ENCODE measurements at regions of chr17 and their contacts with region 1.

Region 1: DNA sequence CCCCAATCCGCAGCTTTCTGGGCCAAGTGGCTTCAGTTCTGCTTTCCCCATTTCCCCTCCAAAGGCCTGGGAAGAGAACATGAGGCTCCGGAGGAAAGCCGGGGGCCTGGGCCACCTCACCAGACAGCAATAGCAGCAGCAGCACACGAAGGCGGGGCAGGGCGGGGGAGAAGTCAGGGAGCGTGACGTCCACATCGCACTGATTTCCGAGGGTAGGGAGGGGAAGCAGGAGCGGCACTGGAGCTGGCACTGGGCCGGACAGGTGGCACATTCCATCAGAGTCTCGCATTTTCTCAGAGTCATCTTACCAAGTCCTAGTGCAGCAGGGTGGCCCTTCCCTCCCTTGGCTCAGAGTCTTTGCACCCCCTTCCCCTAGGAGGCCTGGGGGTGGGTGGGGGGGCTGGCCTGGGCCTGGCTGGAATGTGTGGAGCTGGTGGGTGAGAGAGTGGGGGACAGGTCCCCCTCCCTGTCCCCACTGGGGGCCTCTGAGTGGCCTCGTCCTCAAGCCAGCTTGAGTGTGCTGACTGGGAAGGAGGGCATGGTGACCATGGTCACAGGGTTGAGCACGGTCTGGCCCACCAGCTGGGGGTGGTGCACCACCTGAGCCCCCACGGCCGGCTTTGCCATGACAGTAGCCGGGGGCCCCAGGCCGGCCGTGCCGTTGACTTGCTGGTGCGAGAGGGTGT is 14.3 kb downstream of the MNT start:
- DNase-seq: no peak
- ATAC-seq: no peak
- H3K4me3 ChIP-seq: no peak overlapping the region
- H3K4me3 Mint-ChIP-seq: no peak overlapping the region
- H3K27ac ChIP-seq: no peak overlapping the region
- H3K27ac Mint-ChIP-seq: no peak overlapping the region
- H3K4me1 ChIP-seq: peaks cover 34% of the 10 kb centered on the region
- H3K4me1 Mint-ChIP-seq: peaks cover 36% of the 10 kb centered on the region
- H3K27me3 ChIP-seq: no peaks in the 10 kb centered on the region
- H3K27me3 Mint-ChIP-seq: no peaks in the 10 kb centered on the region
- CTCF ChIP-seq: no peak

Region 2: DNA sequence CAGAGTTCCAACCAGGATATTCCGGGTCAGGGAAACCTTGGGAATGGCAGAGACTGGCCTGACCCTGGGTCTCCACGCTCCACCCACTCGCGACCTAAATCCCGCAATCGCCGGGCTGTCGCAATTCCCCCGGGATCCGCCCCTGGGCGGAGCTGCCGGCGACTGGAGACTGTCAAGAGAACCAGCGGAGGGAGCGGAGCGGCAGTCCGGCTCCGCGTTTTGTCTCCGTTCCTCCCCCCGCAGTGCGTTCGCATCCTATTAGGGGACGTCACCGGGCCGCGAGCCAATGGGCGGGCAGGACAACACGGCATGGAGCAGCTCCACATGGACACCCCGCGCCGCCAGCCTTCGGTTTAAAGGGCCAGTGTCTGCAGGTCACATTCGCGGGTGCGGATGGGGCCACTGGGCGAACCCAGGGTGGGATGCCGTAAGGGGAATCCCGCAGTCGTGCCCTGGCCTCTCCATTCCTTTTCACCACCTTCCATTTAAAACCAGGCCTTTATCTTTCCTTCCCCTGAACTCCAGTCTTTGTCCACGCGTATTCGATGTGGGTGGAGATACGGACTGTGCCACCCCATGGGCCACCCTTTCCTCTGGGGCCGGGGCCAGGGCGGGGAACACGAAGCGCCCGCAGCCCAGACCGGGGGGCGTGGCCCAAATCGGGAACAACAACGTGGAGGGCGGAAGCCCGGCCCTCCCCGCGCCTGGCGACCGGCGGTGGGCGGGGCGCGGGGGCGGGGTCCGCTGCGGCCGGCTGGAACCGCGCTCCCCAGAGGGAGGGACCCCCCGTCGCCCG is 15.1 kb after region 1 on chr17:
- CTCF ChIA-PET with region 1: interaction called, 52 read pairs
- POLR2A ChIA-PET with region 1: interaction called, 132 read pairs
- intact Hi-C with region 1: loop called (anchors 1 to 2 kb)
- DNase-seq: peak; percentile 97 to 99 (median 99)
- ATAC-seq: peak; percentile 58
- H3K4me3 ChIP-seq: peak overlapping the region; percentile 93
- H3K4me3 Mint-ChIP-seq: peak overlapping the region; percentile 100
- H3K27ac ChIP-seq: peak overlapping the region; percentile 93 to 100
- H3K27ac Mint-ChIP-seq: peak overlapping the region; percentile 99
- H3K4me1 ChIP-seq: peaks cover 51% of the 10 kb centered on the region
- H3K4me1 Mint-ChIP-seq: peaks cover 47% of the 10 kb centered on the region
- H3K27me3 ChIP-seq: no peaks in the 10 kb centered on the region
- H3K27me3 Mint-ChIP-seq: no peaks in the 10 kb centered on the region
- CTCF ChIP-seq: no peak

Region 3: DNA sequence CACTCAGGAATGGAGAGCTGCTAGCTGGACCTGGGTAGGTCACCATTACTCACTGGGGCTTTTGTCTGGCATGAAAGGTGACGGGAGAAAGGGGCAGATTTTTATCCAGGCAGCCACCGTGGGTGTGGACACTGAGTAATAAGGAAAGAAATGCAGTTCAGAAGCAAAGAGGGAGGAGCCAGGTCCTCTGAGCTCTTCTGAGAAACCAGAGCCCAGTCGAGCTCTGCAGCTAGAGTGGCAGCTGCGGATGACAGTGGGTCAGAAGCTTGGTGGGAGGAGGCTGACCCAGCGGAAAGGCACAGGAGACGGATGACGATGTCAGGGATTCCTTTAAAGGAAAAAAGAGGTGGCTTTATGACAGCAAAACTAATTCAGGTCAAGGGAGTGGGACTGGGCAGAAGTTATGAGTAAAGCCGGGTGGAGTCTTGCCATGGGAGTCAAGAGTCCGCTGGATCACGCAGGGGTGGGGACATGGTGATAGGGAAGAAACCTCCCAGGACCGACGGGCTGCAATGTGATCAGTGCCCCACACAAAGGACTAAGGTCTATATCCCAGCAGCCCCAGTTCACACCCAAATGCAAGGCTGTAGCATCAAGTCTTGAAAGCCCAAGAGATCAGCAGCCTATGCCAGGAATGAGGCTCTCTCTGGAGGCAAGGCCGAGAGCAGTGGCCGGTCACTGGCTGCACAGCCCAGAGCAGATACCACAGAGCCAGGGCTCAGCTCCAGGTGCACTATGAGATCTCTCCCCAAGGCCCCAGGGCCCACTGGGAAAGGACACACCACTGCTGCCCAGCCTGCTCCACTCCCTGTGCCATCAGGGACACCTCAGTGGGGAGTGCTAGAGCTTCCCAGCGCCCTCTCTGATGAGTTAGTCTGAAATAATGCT is 20.6 kb after region 1 on chr17:
- CTCF ChIA-PET with region 1: interaction called, 52 read pairs
- POLR2A ChIA-PET with region 1: interaction called, 132 read pairs
- intact Hi-C with region 1: loop called in 1 of 2 experiments (anchors 2 kb)
- DNase-seq: no peak
- ATAC-seq: no peak
- H3K4me3 ChIP-seq: no peak overlapping the region
- H3K4me3 Mint-ChIP-seq: no peak overlapping the region
- H3K27ac ChIP-seq: no peak overlapping the region
- H3K27ac Mint-ChIP-seq: no peak overlapping the region
- H3K4me1 ChIP-seq: peaks cover 9% of the 10 kb centered on the region
- H3K4me1 Mint-ChIP-seq: peaks cover 11% of the 10 kb centered on the region
- H3K27me3 ChIP-seq: no peaks in the 10 kb centered on the region
- H3K27me3 Mint-ChIP-seq: no peaks in the 10 kb centered on the region
- CTCF ChIP-seq: no peak

Region 4: DNA sequence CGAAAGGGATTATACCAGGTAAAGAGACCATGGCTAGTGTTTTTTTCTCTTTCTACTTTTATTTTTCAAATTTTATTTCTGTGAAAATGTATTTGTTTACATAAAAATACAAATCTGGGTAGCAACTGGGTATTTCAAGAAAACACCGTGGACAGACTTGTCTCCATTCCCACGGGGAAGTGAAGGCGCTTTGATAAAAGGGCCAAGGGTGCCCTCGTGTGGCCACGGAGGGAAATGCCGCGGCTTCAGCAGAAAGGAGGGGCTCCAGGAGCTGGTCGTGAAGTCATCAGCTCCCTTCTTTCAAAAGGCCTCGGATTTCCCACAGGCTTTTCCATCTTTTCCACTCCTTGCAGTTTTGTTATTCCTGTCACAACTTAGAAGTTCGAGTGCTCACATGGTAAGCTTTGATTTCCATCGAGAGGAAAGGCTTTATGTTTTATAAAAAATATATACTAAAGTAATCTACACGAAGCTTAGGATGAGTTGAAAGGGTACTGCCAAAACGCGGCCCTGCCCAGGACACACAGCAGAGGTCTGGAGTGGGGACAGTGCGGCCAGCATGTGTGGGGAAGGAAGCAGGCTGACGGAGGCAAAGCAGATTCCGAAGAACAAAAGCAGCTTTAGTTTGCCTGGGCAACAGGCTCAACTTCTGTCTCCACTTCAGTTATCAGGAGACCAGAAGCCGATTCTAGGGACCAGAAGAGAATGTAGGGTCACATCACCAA is 29.6 kb after region 1 on chr17:
- CTCF ChIA-PET with region 1: interaction called, 204 read pairs
- POLR2A ChIA-PET with region 1: interaction called, 56 read pairs
- intact Hi-C with region 1: loop called (anchors 1 kb)
- DNase-seq: peak; percentile 70 to 93 (median 85)
- ATAC-seq: peak; percentile 90
- H3K4me3 ChIP-seq: no peak overlapping the region
- H3K4me3 Mint-ChIP-seq: no peak overlapping the region
- H3K27ac ChIP-seq: no peak overlapping the region
- H3K27ac Mint-ChIP-seq: peak overlapping the region; percentile 31
- H3K4me1 ChIP-seq: no peaks in the 10 kb centered on the region
- H3K4me1 Mint-ChIP-seq: no peaks in the 10 kb centered on the region
- H3K27me3 ChIP-seq: no peaks in the 10 kb centered on the region
- H3K27me3 Mint-ChIP-seq: no peaks in the 10 kb centered on the region
- CTCF ChIP-seq: peak; percentile 98

Region 5: GRCh38 chr17:2672026-2672425 is 285.5 kb after region 1 on chr17:
- CTCF ChIA-PET with region 1: no interaction called
- POLR2A ChIA-PET with region 1: no interaction called
- intact Hi-C with region 1: loop called in 1 of 2 experiments (anchors 10 kb)
- DNase-seq: no peak
- ATAC-seq: no peak
- H3K4me3 ChIP-seq: no peak overlapping the region
- H3K4me3 Mint-ChIP-seq: no peak overlapping the region
- H3K27ac ChIP-seq: no peak overlapping the region
- H3K27ac Mint-ChIP-seq: no peak overlapping the region
- H3K4me1 ChIP-seq: no peaks in the 10 kb centered on the region
- H3K4me1 Mint-ChIP-seq: peaks cover 10% of the 10 kb centered on the region
- H3K27me3 ChIP-seq: no peaks in the 10 kb centered on the region
- H3K27me3 Mint-ChIP-seq: no peaks in the 10 kb centered on the region
- CTCF ChIP-seq: no peak

Region 6: DNA sequence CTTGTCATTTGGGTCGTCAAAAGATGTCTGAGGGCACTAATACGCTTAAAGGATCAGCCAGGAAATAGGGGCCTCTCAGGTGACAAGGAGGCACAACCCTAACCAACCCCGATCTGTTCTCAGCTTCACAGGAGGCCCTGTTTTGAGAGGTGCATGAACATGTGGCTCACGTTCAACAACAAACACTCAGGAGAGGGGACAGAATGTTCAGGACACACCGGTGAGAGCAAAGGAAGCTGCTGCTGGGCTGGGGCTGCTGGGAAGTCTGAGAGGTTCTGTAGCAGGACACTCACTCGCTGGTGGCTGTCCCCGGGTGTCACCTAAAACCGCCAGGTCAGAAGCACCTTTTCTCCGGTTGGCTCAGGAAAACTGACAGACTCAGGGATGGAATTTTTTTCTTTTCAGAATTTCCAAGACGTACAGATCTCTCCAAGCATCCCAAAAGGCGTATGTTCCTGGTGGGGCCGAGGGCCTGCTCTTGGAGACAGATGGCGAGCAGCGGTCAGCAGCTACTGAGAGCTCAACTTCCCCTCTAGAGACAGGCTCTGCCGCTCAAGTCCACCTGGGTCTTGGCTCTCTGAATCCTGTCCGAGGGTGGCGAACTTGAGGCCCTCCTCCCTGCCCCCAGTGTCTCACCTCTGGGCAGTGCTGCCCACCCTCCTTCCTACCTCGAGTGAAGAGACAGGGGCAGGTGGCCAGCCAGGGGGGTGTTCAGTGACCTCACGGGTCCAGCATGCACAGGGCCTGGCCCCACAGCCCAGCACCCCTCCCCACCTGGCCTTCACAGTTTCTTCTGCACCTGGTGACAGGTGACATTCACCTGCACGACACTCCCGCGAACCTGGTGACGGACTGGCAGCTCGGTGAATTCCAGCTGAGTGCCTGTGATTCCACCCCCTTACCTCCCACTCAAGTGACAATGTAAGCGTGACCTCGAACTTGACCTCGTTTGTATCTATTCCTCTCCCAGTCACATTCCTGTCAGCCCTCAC is 302.1 kb after region 1 on chr17:
- CTCF ChIA-PET with region 1: no interaction called
- POLR2A ChIA-PET with region 1: no interaction called
- intact Hi-C with region 1: loop called in 1 of 2 experiments (anchors 10 kb)
- DNase-seq: peak in 2 of 14 experiments; percentile 31 to 42
- ATAC-seq: peak; percentile 4
- H3K4me3 ChIP-seq: no peak overlapping the region
- H3K4me3 Mint-ChIP-seq: peak overlapping the region; percentile 74
- H3K27ac ChIP-seq: no peak overlapping the region
- H3K27ac Mint-ChIP-seq: peak overlapping the region; percentile 69
- H3K4me1 ChIP-seq: peaks cover 29% of the 10 kb centered on the region
- H3K4me1 Mint-ChIP-seq: peaks cover 11% of the 10 kb centered on the region
- H3K27me3 ChIP-seq: no peaks in the 10 kb centered on the region
- H3K27me3 Mint-ChIP-seq: no peaks in the 10 kb centered on the region
- CTCF ChIP-seq: no peak

Measured in CD4-positive, alpha-beta T cell (primary cell).